CD4-positive, alpha-beta memory T cell (primary cell): ENCODE measurements at regions of chr10 and their contacts with region 1.

Region 1: DNA sequence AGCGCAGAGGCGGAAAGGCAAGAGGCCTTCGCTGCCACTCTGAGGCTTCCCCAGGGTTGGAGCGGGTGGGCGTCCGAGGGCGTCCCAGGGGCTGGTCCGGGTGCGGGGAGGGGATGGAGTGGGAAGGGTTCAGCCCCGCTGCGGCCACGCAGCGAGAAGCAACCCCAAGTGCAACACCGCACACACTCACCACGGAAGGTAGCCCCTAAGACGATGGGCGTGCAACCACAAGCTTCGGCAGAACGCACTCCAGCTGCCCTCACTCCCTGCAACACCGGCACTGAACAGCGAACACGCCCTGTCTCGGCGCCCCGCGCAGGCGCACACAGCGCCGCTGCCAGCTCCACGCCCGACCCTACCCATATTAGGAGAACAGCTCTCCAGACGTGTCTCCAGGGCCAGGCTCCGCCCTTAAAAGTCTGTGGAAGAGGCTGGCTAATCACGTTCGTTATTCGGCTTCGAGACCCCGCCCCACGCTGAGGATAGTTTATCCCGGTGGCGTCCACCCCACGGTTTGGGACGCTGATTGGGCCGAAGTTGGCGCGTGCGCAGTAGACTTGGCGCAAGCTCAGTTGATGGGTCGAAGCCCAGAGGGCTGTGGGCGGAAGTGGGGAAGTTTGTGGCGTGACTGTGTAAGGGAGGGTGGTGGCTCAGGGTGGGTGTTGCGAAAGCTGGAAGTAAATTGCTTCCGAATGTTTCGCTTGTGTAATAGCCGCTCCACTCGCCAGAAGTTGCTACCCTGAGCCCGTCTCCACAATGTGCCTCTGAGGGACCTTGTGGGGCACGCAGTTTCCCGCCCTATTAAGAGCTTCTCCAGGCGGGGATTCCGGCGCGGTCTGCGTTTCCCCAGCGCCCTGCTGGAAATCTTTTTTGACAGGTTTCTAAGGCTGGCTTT is at the start of gene RSU1:
- DNase-seq: peak; percentile 100
- H3K4me3 ChIP-seq: peak within 1 kb of the TSS; percentile 58 to 70
- H3K4me3 Mint-ChIP-seq: peak within 1 kb of the TSS; percentile 95 to 99 (median 97)
- H3K27ac ChIP-seq: peak within 1 kb of the TSS; percentile 78
- H3K27ac Mint-ChIP-seq: peak within 1 kb of the TSS; percentile 88 to 98 (median 96)
- H3K4me1 ChIP-seq: peaks cover 37% of the 10 kb centered on the region
- H3K4me1 Mint-ChIP-seq: peaks cover 24 to 55% (median 35%) of the 10 kb centered on the region in 4 donors
- H3K27me3 ChIP-seq: no peaks in the 10 kb centered on the region
- H3K27me3 Mint-ChIP-seq: no peaks in the 10 kb centered on the region
- total RNA-seq, gene RSU1: 53.6 to 54.7 TPM

Region 2: GRCh38 chr10:15703151-15703880 is 1114.1 kb before region 1 on chr10:
- CTCF ChIA-PET with region 1: no interaction called
- POLR2A ChIA-PET with region 1: no interaction called
- intact Hi-C with region 1: no loop called
- DNase-seq: no peak
- H3K4me3 ChIP-seq: no peak overlapping the region
- H3K4me3 Mint-ChIP-seq: no peak overlapping the region
- H3K27ac ChIP-seq: no peak overlapping the region
- H3K27ac Mint-ChIP-seq: no peak overlapping the region
- H3K4me1 ChIP-seq: no peaks in the 10 kb centered on the region
- H3K4me1 Mint-ChIP-seq: peaks cover 0 to 3% (median 0%) of the 10 kb centered on the region in 4 donors
- H3K27me3 ChIP-seq: no peaks in the 10 kb centered on the region
- H3K27me3 Mint-ChIP-seq: peaks cover 8 to 11% of the 10 kb centered on the region in 2 donors

Region 3: GRCh38 chr10:15859906-15860691 is 957.3 kb before region 1 on chr10 and contains the start of gene MINDY3:
- CTCF ChIA-PET with region 1: no interaction called
- POLR2A ChIA-PET with region 1: interaction called, 13 read pairs
- intact Hi-C with region 1: loop called (anchors 1 kb)
- DNase-seq: peak; percentile 79 to 84 (median 81)
- H3K4me3 ChIP-seq: peak within 1 kb of the TSS; percentile 87 to 99
- H3K4me3 Mint-ChIP-seq: peak within 1 kb of the TSS; percentile 94 to 99 (median 98)
- H3K27ac ChIP-seq: peak within 1 kb of the TSS; percentile 67
- H3K27ac Mint-ChIP-seq: peak within 1 kb of the TSS; percentile 90 to 96 (median 93)
- H3K4me1 ChIP-seq: peaks cover 42% of the 10 kb centered on the region
- H3K4me1 Mint-ChIP-seq: peaks cover 29 to 49% (median 38%) of the 10 kb centered on the region in 4 donors
- H3K27me3 ChIP-seq: no peaks in the 10 kb centered on the region
- H3K27me3 Mint-ChIP-seq: peaks cover 7 to 8% of the 10 kb centered on the region in 2 donors
- total RNA-seq, gene MINDY3: 35.8 to 40.4 TPM

Region 4: DNA sequence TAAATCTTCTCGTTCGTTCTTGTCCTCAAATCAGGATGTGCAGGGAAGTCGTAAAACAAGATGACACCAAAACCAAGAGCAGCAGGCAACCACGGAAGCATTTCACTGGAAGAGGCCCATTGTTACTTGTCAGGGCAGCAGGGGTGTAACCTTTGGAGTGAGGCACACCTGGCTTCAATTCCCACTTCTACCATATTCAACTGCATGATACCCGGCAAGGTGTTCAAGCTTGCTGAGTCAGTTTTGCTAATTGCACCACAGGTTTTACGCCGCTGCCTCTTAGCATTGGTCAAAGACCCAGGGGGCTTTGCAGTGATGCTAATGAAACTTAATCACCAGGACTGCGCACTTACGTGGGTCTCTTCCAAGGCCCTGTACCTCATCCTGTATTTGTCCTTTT is 430.5 kb before region 1 on chr10:
- CTCF ChIA-PET with region 1: no interaction called
- POLR2A ChIA-PET with region 1: no interaction called
- intact Hi-C with region 1: no loop called
- DNase-seq: no peak
- H3K4me3 ChIP-seq: no peak overlapping the region
- H3K4me3 Mint-ChIP-seq: no peak overlapping the region
- H3K27ac ChIP-seq: no peak overlapping the region
- H3K27ac Mint-ChIP-seq: no peak overlapping the region
- H3K4me1 ChIP-seq: no peaks in the 10 kb centered on the region
- H3K4me1 Mint-ChIP-seq: no peaks in the 10 kb centered on the region
- H3K27me3 ChIP-seq: no peaks in the 10 kb centered on the region
- H3K27me3 Mint-ChIP-seq: peaks cover 5 to 10% of the 10 kb centered on the region in 2 donors

Region 5: DNA sequence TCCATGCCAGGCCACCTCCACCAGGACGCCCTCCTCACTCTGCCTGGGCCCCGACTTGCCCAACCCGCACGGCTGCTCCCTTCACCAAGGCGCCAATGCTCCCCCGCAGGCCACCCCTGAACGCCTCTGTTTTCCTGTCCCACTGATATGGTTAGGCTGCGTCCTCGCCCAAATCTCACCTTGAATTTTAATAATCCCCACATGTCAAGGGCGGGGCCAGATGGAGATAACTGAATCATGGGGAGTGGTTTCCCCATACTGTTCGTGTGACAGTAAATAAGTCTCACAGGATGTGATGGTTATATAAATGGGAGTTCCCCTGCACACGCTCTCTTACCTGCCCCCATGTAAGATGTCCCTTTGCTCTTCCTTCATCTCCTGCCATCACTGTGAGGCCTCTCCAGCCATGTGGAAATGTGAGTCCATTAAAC is 30.0 kb before region 1 on chr10:
- CTCF ChIA-PET with region 1: interaction called, 5 read pairs
- POLR2A ChIA-PET with region 1: interaction called, 19 read pairs
- intact Hi-C with region 1: loop called (anchors 1 kb)
- DNase-seq: peak; percentile 78 to 91 (median 83)
- H3K4me3 ChIP-seq: no peak overlapping the region
- H3K4me3 Mint-ChIP-seq: peak overlapping the region; percentile 51 to 78 (median 66)
- H3K27ac ChIP-seq: peak overlapping the region; percentile 76
- H3K27ac Mint-ChIP-seq: peak overlapping the region; percentile 87 to 100 (median 99)
- H3K4me1 ChIP-seq: peaks cover 28% of the 10 kb centered on the region
- H3K4me1 Mint-ChIP-seq: peaks cover 26 to 48% (median 31%) of the 10 kb centered on the region in 4 donors
- H3K27me3 ChIP-seq: no peaks in the 10 kb centered on the region
- H3K27me3 Mint-ChIP-seq: no peaks in the 10 kb centered on the region

Region 6: DNA sequence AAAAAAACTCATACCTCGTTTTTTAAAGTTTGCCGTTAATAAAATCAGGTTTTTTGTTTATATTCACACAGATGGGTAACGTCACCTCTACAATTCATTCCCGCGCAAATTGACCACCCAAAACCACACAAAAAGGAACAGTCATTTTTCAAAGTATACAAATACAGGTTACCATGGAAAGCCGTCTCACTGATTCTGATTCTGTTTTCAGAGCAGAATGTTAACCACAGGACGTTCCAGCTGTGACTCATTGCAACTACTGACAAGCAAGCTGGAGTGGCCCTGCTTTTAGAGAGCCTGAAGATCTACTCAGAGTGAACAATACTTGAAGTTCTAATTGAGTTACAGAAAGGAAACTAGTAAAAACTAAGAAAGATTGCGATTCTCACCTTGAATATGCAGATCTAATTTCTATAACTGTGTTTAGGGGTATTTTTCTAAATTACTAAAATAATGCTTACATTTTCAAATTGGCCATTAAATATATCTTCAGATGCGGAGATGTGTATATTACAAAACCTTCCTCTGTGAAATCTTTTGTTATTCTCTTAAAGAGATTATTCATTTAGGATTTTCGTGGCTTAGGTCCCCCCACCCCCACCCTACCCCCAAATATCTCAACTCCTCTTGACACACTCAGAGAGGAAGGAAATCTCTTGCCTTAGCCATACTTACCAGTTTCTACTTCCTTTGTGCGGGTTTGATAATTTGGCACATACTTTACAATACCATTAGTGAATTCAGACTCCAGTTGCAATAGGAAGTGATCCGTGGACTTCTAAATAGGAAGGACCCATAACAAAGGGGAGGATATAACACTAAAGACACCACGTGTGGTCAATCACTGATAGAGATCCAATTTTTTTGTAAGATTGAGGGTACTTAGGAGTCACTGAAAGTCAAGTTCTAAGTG is 206.3 kb after region 1 on chr10:
- CTCF ChIA-PET with region 1: no interaction called
- POLR2A ChIA-PET with region 1: interaction called, 5 read pairs
- intact Hi-C with region 1: loop called (anchors 1 kb)
- DNase-seq: peak; percentile 87 to 96 (median 91)
- H3K4me3 ChIP-seq: peak overlapping the region in 1 of 2 donors; percentile 4
- H3K4me3 Mint-ChIP-seq: peak overlapping the region; percentile 6 to 74 (median 54)
- H3K27ac ChIP-seq: peak overlapping the region; percentile 88
- H3K27ac Mint-ChIP-seq: peak overlapping the region; percentile 92 to 100 (median 99)
- H3K4me1 ChIP-seq: peaks cover 63% of the 10 kb centered on the region
- H3K4me1 Mint-ChIP-seq: peaks cover 46 to 76% (median 57%) of the 10 kb centered on the region in 4 donors
- H3K27me3 ChIP-seq: no peaks in the 10 kb centered on the region
- H3K27me3 Mint-ChIP-seq: no peaks in the 10 kb centered on the region

Region 7: DNA sequence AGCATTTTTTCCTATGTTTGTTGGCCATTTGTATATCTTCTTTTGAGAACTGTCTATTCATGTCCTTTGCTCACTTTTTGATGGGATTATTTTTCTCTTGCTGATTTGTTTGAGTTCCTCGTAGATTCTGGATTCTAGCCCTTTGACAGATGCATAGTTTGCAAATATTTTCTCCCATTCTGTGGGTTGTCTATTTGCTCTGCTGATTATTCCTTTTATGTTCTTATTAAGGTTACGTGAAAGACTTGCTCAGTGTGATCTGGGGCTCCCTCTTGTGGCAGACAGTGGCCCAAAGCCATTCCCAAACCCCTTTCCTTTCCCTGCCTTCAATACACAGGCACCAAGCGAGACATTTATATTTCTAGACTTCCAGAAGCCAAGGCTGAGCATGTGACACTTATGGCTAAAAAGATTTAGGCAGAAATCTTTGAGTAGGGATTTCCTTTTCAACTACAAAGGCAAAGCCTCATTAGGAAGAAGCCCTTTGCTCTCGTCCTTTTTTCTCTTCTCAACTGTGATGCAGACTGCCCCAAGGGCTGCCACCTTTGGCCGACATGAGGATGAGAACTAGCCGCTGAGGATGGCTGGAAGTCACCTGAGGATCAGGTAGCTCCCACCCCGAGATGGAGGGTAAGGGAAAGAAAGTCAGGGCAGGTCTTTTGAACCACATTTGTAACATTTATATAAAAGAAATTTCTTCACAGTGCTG is 613.4 kb after region 1 on chr10:
- CTCF ChIA-PET with region 1: interaction called, 7 read pairs
- POLR2A ChIA-PET with region 1: interaction called, 22 read pairs
- intact Hi-C with region 1: loop called (anchors 2 kb)
- DNase-seq: peak; percentile 54 to 68 (median 63)
- H3K4me3 ChIP-seq: no peak overlapping the region
- H3K4me3 Mint-ChIP-seq: peak overlapping the region in 6 of 8 donors; percentile 39 to 79 (median 66)
- H3K27ac ChIP-seq: no peak overlapping the region
- H3K27ac Mint-ChIP-seq: peak overlapping the region; percentile 24 to 95 (median 50)
- H3K4me1 ChIP-seq: peaks cover 52% of the 10 kb centered on the region
- H3K4me1 Mint-ChIP-seq: peaks cover 45 to 53% (median 50%) of the 10 kb centered on the region in 4 donors
- H3K27me3 ChIP-seq: no peaks in the 10 kb centered on the region
- H3K27me3 Mint-ChIP-seq: peaks cover 0 to 1% of the 10 kb centered on the region in 2 donors